Activated T-helper 1 cell treated with anti-CD3 and anti-CD28 coated beads, Interleukin-12 subunit alpha, Interleukin-12 subunit beta, Interleukin-2, Interleukin-4 antibody, amounts not matched to agents 30 ng/mL and 10 ng/mL and 1 ng/mL, durations not matched to agents 14 hours and 24 hours and 36 hours (primary cell): ENCODE measurements at regions of chr17 and their contacts with region 1.

Region 1: DNA sequence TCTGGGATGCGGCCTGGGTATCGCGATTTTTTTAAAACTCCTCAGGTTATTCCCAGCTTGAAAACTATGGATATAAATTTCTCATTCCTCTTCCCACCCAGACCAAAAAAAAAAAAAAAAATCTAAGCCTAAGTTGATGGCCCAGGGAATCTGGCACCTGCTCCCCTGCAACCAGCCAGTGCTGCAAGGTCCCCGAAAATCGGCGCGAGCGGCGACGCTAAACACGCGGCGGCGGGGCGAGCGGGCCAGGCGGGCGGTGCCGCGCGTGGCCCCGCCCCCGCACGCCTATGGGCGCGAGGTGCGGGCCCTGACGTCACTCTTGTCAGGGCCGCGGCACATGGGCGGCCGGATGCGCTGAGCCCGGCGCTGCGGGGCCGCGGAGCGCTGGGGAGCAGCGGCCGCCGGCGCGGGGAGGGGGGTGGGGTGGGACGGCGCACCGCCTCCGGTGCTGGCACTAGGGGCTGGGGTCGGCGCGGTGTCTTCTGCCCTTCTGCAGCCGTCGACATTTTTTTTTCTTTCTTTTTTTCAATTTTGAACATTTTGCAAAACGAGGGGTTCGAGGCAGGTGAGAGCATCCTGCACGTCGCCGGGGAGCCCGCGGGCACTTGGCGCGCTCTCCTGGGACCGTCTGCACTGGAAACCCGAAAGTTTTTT is at the start of gene HLF:
- DNase-seq: peak; percentile 72
- H3K4me3 Mint-ChIP-seq: peak within 1 kb of the TSS; percentile 69
- H3K27ac Mint-ChIP-seq: no peak within 1 kb of the TSS
- H3K4me1 Mint-ChIP-seq: peaks cover 14% of the 10 kb centered on the region
- H3K27me3 Mint-ChIP-seq: peaks cover 81% of the 10 kb centered on the region
- total RNA-seq, gene HLF: 0.36 and 0.54 TPM in 2 replicates

Region 2: GRCh38 chr17:55072898-55073297 is 191.9 kb before region 1 on chr17:
- intact Hi-C with region 1: no loop called
- DNase-seq: no peak
- H3K4me3 Mint-ChIP-seq: no peak overlapping the region
- H3K27ac Mint-ChIP-seq: peak overlapping the region; percentile 60
- H3K4me1 Mint-ChIP-seq: peaks cover 8% of the 10 kb centered on the region
- H3K27me3 Mint-ChIP-seq: no peaks in the 10 kb centered on the region

Region 3: GRCh38 chr17:55190748-55191147 is 74.0 kb before region 1 on chr17:
- intact Hi-C with region 1: no loop called
- DNase-seq: no peak
- H3K4me3 Mint-ChIP-seq: no peak overlapping the region
- H3K27ac Mint-ChIP-seq: no peak overlapping the region
- H3K4me1 Mint-ChIP-seq: no peaks in the 10 kb centered on the region
- H3K27me3 Mint-ChIP-seq: peaks cover 6% of the 10 kb centered on the region

Region 4: DNA sequence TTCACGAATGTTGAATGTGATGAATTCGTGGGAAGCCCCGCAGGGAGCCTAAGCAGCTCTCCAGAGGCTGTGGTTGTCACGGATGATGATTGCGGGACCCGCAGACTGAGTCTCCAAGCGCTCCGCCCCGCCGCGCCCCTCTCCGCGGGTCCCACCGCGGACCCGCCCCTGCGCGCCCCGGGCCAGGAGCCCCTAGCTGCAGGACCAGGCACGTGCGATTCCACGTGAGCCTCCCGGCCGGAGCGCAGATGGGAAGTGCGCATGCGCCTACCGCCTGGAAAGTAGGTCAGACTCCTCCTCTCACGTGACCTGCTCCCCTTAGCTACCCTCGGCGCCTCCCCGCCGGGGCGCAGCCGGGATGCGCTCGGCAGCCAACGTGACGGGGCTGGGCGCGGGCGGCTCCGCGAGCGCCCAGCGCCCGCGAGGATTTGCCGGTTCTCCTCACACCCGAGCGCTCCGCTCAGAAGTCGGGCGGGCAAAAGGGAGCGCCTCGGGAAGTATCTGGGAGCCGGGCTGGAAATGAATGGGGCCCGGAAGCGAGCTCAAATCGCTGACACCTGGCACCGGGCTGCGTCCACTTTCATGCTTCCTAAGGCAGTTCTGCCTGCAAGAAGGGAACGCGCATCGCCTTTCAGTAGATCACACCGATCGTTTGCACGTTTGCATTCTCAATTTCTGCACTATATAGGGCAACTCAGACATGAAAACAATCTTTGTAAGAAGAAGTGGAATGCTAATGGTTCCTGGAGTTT is 26.4 kb before region 1 on chr17:
- intact Hi-C with region 1: loop called (anchors 1 kb)
- DNase-seq: peak; percentile 75
- H3K4me3 Mint-ChIP-seq: peak overlapping the region; percentile 81
- H3K27ac Mint-ChIP-seq: peak overlapping the region; percentile 69
- H3K4me1 Mint-ChIP-seq: peaks cover 17% of the 10 kb centered on the region
- H3K27me3 Mint-ChIP-seq: peaks cover 34% of the 10 kb centered on the region

Region 5: DNA sequence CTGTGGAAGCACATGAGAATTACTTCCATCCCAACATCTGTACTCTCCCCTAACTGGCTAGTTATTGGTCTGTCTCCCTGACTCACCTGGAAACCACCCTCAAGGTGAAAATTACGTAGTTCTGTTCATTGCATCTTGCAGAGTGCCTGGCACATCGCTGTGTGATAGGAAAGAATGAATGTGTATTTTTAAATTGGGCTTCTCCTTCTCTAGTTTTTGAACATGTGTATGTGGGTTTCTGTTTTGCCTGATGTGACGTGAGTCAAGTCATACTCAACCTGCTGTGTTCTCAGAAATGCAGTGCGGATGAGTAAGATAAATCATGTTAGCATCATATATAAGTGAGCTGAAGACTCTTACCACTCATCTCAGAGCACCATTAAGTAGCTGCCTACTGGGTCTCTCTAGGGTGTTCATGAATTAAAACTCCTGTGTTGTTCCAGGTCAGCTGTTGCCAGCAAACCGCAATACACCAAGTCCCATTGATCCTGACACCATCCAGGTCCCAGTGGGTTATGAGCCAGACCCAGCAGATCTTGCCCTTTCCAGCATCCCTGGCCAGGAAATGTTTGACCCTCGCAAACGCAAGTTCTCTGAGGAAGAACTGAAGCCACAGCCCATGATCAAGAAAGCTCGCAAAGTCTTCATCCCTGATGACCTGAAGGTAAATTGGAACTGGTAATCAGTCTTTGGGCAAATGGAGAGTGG is 50.2 kb after region 1 on chr17:
- intact Hi-C with region 1: loop called (anchors 1 kb)
- DNase-seq: peak; percentile 27
- H3K4me3 Mint-ChIP-seq: no peak overlapping the region
- H3K27ac Mint-ChIP-seq: peak overlapping the region; percentile 85
- H3K4me1 Mint-ChIP-seq: peaks cover 25% of the 10 kb centered on the region
- H3K27me3 Mint-ChIP-seq: peaks cover 5% of the 10 kb centered on the region